ENCODE measurements at regions of chr11 and their contacts with region 1.

Region 1: GRCh38 chr11:74748211-74749127 is at the start of gene RNF169:
- DNase-seq: peak; percentile 99
- H3K4me3 ChIP-seq: peak within 1 kb of the TSS; percentile 87 to 91 (median 87)
- H3K27ac ChIP-seq: peak within 1 kb of the TSS; percentile 92 to 97 (median 96)
- H3K4me1 ChIP-seq: peaks cover 7 to 62% (median 54%) of the 10 kb centered on the region in 4 donors
- H3K27me3 ChIP-seq: no peaks in the 10 kb centered on the region
- CTCF ChIP-seq: no peak
- EP300 ChIP-seq: no peak
- POLR2A ChIP-seq: no peak
- total RNA-seq, gene RNF169: 16.2 to 26.6 (median 20.6) TPM

Region 2: DNA sequence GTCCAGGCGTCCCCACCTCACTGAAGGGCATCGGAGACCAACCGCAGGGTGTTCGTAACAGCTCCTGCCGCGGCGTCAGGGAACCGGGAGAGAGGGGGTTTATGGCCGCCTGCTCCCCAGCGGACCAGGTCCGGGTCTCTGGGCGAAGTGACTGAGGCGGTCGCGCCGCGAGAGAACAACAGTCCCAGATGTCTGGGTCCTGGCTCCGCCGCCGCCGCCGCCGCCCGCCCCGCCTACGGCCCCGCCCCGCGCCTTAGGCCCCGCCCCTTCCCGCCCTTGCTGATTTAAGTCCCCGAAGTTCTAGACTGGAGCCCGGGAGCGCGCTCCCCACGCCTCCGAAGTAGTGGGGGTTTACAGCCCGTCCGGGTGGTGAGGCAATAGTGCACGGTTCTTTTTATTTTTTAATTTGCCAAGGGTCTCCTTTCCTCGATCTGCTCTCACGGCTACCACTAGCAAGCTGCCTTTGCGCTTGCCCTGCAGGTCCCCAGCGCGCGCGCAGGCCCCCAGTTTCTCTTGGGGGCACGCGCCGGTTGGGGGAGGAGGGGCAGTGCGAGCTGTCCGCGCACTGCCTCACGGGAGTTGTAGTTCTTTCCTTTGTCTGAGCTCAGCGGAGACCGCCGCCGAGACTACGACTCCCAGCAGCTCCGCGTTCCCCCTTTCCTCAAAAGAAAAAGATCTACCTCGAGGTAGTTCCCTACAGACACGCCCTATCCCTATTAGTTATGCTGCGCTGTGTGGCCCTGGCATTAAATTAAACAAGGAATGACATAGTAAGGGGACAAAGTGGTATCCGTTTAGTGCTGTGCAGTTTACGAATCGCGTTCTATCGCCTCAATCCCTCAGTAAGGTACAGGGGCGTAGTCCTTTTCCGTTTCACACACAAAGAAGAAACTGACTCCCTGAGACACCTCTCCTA is 350.0 kb before region 1 on chr11 and contains the start of gene PGM2L1:
- intact Hi-C with region 1: loop called (anchors 10 kb)
- DNase-seq: peak; percentile 98
- H3K4me3 ChIP-seq: peak within 1 kb of the TSS; percentile 81 to 95 (median 88)
- H3K27ac ChIP-seq: peak within 1 kb of the TSS; percentile 89 to 95 (median 91)
- H3K4me1 ChIP-seq: peaks cover 4 to 14% (median 7%) of the 10 kb centered on the region in 4 donors
- H3K27me3 ChIP-seq: no peaks in the 10 kb centered on the region
- CTCF ChIP-seq: no peak
- EP300 ChIP-seq: no peak
- POLR2A ChIP-seq: peak; percentile 24
- total RNA-seq, gene PGM2L1: 2.5 to 6.4 (median 5.8) TPM

Region 3: GRCh38 chr11:74806267-74806666 is 57.8 kb after region 1 on chr11:
- intact Hi-C with region 1: no loop called
- DNase-seq: no peak
- H3K4me3 ChIP-seq: no peak overlapping the region
- H3K27ac ChIP-seq: no peak overlapping the region
- H3K4me1 ChIP-seq: peaks cover 7 to 18% (median 11%) of the 10 kb centered on the region in 4 donors
- H3K27me3 ChIP-seq: no peaks in the 10 kb centered on the region
- CTCF ChIP-seq: no peak
- EP300 ChIP-seq: no peak
- POLR2A ChIP-seq: no peak

Region 4: GRCh38 chr11:75063732-75064314 is 315.4 kb after region 1 on chr11:
- intact Hi-C with region 1: no loop called
- DNase-seq: no peak
- H3K4me3 ChIP-seq: no peak overlapping the region
- H3K27ac ChIP-seq: no peak overlapping the region
- H3K4me1 ChIP-seq: no peaks in the 10 kb centered on the region
- H3K27me3 ChIP-seq: peaks cover 0 to 10% (median 0%) of the 10 kb centered on the region in 4 donors
- CTCF ChIP-seq: no peak
- EP300 ChIP-seq: no peak
- POLR2A ChIP-seq: no peak

Measured in esophagus muscularis mucosa (tissue), 4 donors.